HepG2 (cell line): ENCODE measurements at regions of chr13 and their contacts with region 1.

Region 1: DNA sequence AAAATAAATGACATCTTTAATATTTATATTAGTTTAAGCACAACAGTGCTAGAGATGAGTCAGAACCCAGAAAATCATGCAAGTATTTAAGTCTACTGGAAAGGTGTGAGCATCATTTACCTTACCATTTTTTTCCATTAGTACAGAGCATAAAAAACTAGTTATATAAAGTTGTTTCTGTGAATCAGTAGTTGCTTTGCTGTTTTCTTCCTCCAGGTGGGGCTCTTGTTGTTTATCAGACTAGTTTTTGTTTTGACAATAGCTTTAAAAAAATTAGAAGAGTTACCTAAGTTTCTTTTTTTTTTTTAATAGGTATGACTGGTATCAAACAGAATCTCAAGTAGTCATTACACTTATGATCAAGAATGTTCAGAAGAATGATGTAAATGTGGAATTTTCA is 12.7 kb downstream of the SUGT1 start:
- DNase-seq: peak; percentile 15
- ATAC-seq: no peak
- H3K4me3 ChIP-seq: no peak overlapping the region
- H3K27ac ChIP-seq: no peak overlapping the region
- H3K4me1 ChIP-seq: no peaks in the 10 kb centered on the region
- H3K27me3 ChIP-seq: no peaks in the 10 kb centered on the region
- CTCF ChIP-seq: peak; percentile 28; the same call in 1 of the 2 replicates
- EP300 ChIP-seq: no peak
- POLR2A ChIP-seq: no peak
- RAD21 ChIP-seq: no peak

Region 2: DNA sequence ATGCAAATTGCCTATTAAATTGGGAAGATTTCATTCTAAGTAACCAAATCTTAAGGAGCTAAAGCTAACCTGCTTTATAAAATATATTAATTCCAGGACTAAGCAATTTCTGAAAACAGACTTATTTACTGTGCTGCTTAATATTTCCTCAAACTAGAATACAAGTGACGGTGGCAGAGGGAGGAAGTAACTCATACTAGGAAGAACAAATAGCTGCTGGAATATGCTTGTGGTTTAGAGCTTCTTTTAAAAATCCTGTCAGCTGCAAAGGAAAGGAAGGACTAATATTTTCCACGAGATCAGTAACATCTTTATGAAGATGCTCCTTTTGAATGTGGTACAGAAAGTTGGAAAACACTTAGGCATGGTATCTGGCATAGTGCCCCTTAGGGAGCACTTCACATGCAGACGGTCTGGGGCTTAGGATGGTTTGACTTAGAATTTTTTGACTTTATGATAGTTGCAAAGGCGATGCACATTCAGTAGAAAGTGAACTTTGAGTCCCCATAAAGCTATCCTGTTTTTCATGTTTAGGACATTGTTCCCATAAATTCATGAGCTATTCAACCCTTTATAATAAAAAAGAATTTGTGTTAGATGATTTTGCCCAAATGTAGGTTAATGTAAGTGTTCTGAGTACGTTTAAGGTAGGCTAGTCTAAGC is 26.5 kb before region 1 on chr13:
- CTCF ChIA-PET with region 1: no interaction called
- POLR2A ChIA-PET with region 1: no interaction called
- in situ Hi-C with region 1: no loop called
- intact Hi-C with region 1: no loop called
- DNase-seq: no peak
- ATAC-seq: no peak
- H3K4me3 ChIP-seq: no peak overlapping the region
- H3K27ac ChIP-seq: no peak overlapping the region
- H3K4me1 ChIP-seq: no peaks in the 10 kb centered on the region
- H3K27me3 ChIP-seq: no peaks in the 10 kb centered on the region
- CTCF ChIP-seq: no peak
- EP300 ChIP-seq: no peak
- POLR2A ChIP-seq: no peak
- RAD21 ChIP-seq: no peak

Region 3: DNA sequence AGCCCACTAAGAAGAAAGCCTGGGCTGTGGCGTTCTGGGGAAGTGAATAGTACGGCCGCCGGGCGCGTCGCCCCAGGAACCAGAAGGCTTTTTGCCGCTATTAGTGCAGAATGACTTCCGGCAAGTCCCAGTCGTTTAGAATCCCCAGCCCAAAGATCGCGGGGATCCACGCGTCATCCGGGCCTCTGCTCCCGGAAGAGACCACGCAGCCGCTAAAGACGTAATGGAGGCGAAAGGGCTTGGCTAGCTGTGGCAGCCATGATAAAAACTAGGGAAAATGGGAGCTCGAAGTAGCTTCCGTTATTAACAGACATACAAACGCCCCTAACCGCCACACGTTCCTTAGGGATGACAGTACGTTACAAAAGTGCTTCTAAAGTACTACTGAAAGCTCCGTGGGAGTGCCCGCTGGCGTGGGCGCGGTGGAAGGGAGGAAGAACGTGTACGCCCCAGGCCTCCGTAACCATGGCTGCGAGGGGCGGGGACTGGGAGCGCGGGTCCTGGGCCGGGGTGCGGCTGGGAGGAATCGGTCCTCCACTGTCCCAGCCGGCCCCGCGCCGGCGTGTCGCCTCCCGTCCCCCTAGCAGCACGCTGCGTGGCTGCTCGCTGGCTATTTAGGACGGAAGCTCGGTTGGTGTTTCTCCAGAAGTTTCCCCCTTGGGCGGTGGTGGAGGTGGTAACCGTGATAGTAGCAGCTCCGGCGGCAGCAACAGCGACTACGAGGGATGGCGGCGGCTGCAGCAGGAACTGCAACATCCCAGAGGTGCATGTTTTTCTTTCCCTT is 12.9 kb before region 1 on chr13 and contains the start of gene SUGT1:
- CTCF ChIA-PET with region 1: no interaction called
- POLR2A ChIA-PET with region 1: interaction called, 13 read pairs
- in situ Hi-C with region 1: no loop called
- intact Hi-C with region 1: no loop called
- DNase-seq: peak; percentile 94
- ATAC-seq: peak; percentile 98
- H3K4me3 ChIP-seq: peak within 1 kb of the TSS; percentile 90 to 95 (median 92)
- H3K27ac ChIP-seq: peak within 1 kb of the TSS; percentile 100
- H3K4me1 ChIP-seq: peaks cover 43% of the 10 kb centered on the region
- H3K27me3 ChIP-seq: no peaks in the 10 kb centered on the region; a peak in 1 of 5 replicates
- CTCF ChIP-seq: peak; percentile 70
- EP300 ChIP-seq: no peak
- POLR2A ChIP-seq: peak; percentile 91 to 93
- RAD21 ChIP-seq: no peak; the same call in 1 of the 2 replicates
- total RNA-seq, gene SUGT1: 71.2 and 113 TPM in 2 replicates

Region 4: DNA sequence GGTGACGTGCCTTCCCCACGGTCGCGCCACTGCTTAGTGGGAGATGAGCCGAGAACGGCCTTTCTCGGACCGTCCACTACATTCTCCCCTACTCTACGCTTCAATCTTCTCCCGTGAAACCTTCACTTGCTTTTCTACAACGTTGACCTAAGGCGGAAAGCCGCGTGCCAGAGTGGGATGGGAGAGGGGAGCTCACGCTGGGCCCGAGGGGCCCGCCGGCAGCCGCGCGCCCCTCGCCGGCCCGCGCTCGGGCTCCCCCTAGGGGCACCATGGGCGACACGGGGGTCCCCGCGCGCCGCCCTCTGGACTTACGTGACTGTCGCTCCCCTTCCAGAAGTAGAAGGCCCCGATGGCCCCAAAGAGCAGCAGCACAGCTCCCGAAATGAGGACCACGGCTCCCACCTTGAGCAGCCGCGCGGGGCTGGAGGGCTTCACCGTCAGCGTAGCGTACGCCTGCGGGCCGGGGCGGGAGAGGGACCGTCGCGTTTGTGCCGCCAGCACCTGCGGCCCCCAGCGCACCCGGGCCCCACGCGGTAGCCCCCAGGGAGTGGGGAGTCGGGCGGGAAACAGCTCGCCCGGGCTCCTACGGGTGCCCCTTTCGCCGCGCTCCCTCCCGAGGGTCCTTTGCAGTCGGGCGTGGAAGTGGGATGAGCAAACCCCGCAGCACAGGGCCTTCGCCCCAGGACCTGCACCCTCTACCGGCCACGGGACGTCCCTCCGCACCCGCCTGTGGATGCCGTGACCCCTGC is 73.6 kb after region 1 on chr13:
- CTCF ChIA-PET with region 1: interaction called, 6 read pairs
- POLR2A ChIA-PET with region 1: no interaction called
- in situ Hi-C with region 1: no loop called
- intact Hi-C with region 1: loop called (anchors 5 kb)
- DNase-seq: no peak
- ATAC-seq: peak; percentile 92
- H3K4me3 ChIP-seq: peak overlapping the region; percentile 19 to 62 (median 41); a peak in 5 of 6 replicates
- H3K27ac ChIP-seq: no peak overlapping the region
- H3K4me1 ChIP-seq: no peaks in the 10 kb centered on the region
- H3K27me3 ChIP-seq: peaks cover 1 to 22% of the 10 kb centered on the region in 2 experiments; a peak in 2 of 5 replicates
- CTCF ChIP-seq: peak; percentile 56
- EP300 ChIP-seq: no peak
- POLR2A ChIP-seq: no peak
- RAD21 ChIP-seq: no peak

Region 5: DNA sequence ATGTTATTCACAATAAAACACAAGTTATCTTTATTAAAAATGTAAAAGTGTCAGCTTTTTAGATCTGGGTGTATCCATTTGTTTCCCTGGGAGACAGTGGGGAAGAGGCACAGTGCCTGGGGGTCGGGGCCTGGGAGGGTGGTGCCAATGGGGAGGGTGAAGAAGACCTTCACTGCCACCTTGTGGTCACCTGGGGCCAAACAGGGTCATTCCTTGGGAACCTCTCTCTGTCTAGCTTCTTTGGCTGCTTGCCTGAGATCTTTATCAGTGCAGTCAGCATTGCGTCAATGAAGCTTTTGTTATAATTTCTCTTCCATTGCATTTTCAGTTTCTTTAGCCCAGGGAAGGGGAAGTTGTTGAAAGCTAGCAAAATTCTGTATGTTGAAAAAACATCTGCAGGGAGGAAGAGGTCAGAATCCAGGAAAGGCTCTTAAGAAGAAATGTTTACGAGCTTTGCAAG is 144.0 kb after region 1 on chr13:
- CTCF ChIA-PET with region 1: interaction called, 16 read pairs
- POLR2A ChIA-PET with region 1: no interaction called
- in situ Hi-C with region 1: no loop called
- intact Hi-C with region 1: loop called (anchors 1 kb)
- DNase-seq: peak; percentile 80
- ATAC-seq: peak; percentile 97
- H3K4me3 ChIP-seq: no peak overlapping the region
- H3K27ac ChIP-seq: no peak overlapping the region
- H3K4me1 ChIP-seq: peaks cover 7% of the 10 kb centered on the region; the same call in 1 of the 2 replicates
- H3K27me3 ChIP-seq: 0 out of 5 replicates have a peak, but pooled peaks cover 0 to 4% of the 10 kb centered on the region in 2 experiments
- CTCF ChIP-seq: peak; percentile 90
- EP300 ChIP-seq: no peak
- POLR2A ChIP-seq: no peak
- RAD21 ChIP-seq: peak; percentile 69

Region 6: GRCh38 chr13:52830946-52831345 is 165.6 kb after region 1 on chr13:
- CTCF ChIA-PET with region 1: no interaction called
- POLR2A ChIA-PET with region 1: no interaction called
- in situ Hi-C with region 1: no loop called
- intact Hi-C with region 1: no loop called
- DNase-seq: no peak
- ATAC-seq: no peak
- H3K4me3 ChIP-seq: no peak overlapping the region
- H3K27ac ChIP-seq: no peak overlapping the region
- H3K4me1 ChIP-seq: no peaks in the 10 kb centered on the region
- H3K27me3 ChIP-seq: no peaks in the 10 kb centered on the region; a peak in 1 of 5 replicates
- CTCF ChIP-seq: no peak
- EP300 ChIP-seq: no peak
- POLR2A ChIP-seq: no peak
- RAD21 ChIP-seq: no peak